ENCODE measurements at regions of chr2 and their contacts with region 1.

Region 1: GRCh38 chr2:71510196-71510807 is 56.9 kb downstream of the DYSF start:
- DNase-seq: peak; percentile 64 to 91
- ATAC-seq: peak; percentile 73 to 91; a peak in 5 of 6 replicates
- H3K4me3 ChIP-seq: no peak overlapping the region
- H3K27ac ChIP-seq: no peak overlapping the region
- H3K4me1 ChIP-seq: no peaks in the 10 kb centered on the region
- CTCF ChIP-seq: peak; percentile 98
- EP300 ChIP-seq: no peak
- POLR2A ChIP-seq: no peak
- RAD21 ChIP-seq: peak; percentile 94 to 95

Region 2: DNA sequence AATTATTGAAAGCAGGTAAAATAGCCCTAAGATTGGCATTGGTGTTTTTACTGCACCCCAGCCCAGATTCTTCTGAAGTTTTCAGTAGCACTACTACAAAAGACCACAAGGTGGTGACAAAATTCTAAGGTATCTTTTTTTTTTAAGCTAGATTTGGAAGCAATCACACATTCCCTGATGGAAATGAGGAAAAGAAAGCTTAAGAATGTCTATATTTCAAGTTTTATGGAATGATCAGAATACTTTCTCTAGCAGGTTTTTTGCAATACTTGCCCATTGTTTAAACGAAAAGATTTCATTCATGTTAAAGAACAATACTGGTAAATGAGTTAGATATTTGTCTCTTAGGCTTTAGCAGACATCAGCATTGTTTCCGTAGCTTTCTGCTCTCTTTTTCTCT is 210.8 kb before region 1 on chr2:
- CTCF ChIA-PET with region 1: interaction called, 234 read pairs
- POLR2A ChIA-PET with region 1: interaction called, 7 read pairs
- DNase-seq: peak; percentile 39 to 41
- ATAC-seq: peak; percentile 71 to 74; a peak in 5 of 6 replicates
- H3K4me3 ChIP-seq: no peak overlapping the region
- H3K27ac ChIP-seq: no peak overlapping the region
- H3K4me1 ChIP-seq: no peaks in the 10 kb centered on the region
- CTCF ChIP-seq: peak; percentile 90
- EP300 ChIP-seq: no peak
- POLR2A ChIP-seq: no peak
- RAD21 ChIP-seq: peak; percentile 80 to 83

Region 3: DNA sequence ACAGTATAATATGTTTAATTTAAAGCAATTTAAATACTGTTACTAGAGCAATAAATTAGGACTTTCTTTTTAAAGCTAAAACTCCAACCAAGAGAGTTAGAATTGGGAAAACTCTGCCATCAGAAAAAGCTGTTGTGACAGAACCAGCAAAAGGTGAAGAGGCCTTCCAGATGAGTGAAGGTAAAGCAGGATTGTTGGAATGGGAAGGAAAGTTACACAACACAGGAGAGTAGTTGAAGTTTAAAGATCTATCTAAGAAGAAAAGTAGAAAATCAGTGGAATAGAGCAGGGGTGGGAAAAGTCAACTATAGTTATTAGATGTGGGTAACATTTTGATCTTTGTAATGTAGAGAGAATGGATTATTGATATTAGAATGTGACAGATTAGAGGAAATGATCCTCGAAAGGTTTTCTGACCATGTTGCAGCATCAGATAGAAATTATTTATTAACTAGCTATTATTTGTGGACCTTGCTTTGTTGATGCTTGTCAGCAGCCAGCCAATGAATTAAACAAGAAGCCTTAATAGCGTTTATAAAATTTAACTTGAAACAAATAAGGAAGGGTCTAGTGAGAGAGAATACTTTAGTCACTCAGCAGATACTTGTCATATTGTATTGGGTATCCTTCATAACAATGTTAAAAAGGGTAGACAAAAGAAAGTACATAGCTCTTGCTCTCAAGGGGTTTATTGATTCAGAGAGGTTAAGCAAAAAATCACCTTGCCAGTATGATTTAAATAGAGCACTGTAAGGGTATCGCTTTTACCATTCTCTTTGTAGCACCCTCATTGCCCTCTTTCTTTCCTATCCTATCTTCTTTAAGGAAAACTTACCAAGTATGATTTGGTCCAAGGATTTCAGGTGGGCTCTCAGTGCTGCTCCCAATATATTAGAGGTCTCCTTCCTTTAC is 81.6 kb before region 1 on chr2:
- CTCF ChIA-PET with region 1: interaction called, 10 read pairs
- POLR2A ChIA-PET with region 1: no interaction called
- DNase-seq: no peak
- ATAC-seq: no peak
- H3K4me3 ChIP-seq: no peak overlapping the region
- H3K27ac ChIP-seq: no peak overlapping the region
- H3K4me1 ChIP-seq: no peaks in the 10 kb centered on the region; the same call in 2 of the 3 replicates
- CTCF ChIP-seq: no peak
- EP300 ChIP-seq: no peak
- POLR2A ChIP-seq: no peak
- RAD21 ChIP-seq: no peak

Region 4: GRCh38 chr2:71466303-71467173 is 43.8 kb before region 1 on chr2:
- CTCF ChIA-PET with region 1: interaction called, 311 read pairs
- POLR2A ChIA-PET with region 1: no interaction called
- DNase-seq: peak; percentile 41 to 46
- ATAC-seq: peak; percentile 55 to 78
- H3K4me3 ChIP-seq: peak overlapping the region; percentile 57
- H3K27ac ChIP-seq: peak overlapping the region; percentile 30 to 79; a peak in 5 of 6 replicates
- H3K4me1 ChIP-seq: no peaks in the 10 kb centered on the region
- CTCF ChIP-seq: no peak
- EP300 ChIP-seq: no peak
- POLR2A ChIP-seq: no peak
- RAD21 ChIP-seq: no peak

Region 5: DNA sequence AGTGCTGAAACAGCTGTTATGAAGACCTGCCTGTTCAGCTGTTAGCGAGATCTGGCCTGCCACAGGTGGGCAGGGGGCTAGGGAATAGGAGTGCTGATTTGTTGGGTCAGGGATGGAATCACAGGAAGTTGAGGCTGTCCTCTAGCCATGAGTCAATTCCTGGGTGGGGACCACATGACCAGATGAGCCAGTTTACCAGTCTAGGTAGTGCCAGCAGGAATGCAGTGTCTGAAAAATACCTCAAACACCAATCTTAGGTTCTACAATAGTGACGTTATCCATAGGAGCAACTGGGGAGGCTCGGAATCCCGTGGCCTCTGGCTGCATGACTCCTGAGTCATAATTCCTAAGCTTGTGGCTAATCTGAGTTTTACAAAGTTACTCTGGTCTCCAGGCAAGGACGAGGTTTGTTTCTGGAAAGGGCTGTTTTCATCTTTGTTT is 12.0 kb before region 1 on chr2:
- CTCF ChIA-PET with region 1: interaction called, 47 read pairs
- POLR2A ChIA-PET with region 1: no interaction called
- DNase-seq: peak; percentile 25 to 75
- ATAC-seq: peak; percentile 83 to 84
- H3K4me3 ChIP-seq: no peak overlapping the region
- H3K27ac ChIP-seq: peak overlapping the region; percentile 14 to 55; a peak in 3 of 6 replicates
- H3K4me1 ChIP-seq: 0 out of 3 replicates have a peak, but pooled peaks cover 13% of the 10 kb centered on the region
- CTCF ChIP-seq: no peak
- EP300 ChIP-seq: no peak
- POLR2A ChIP-seq: no peak
- RAD21 ChIP-seq: no peak

Region 6: DNA sequence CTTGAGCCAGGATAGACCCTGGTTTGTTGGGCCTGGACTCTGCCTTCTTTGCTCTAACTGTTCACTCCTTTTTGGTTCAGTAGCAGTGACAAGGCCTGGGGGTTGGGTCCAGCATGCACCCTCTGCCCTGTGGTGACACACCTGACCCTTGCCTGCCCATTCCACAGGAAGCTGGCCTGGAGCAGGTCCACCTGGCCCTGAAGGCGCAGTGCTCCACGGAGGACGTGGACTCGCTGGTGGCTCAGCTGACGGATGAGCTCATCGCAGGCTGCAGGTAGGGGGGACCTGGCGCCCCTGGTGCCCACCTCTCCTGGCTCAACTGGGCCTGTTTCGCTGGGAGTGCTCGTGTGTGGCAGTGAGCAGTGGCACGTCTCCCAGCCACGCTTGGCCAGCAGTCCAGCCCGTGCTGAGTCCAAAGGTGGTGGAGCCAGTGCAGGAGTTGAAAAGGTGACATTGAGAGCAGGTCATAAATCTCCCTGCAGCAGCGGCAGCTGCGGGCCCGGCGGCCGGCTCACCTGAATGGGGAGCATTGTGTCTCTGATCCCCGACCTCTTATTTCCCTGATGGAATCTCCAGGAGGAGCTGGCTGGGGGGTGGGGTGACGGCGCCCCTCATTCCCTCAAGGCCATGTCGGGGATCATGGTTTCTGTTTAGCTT is 45.6 kb after region 1 on chr2:
- CTCF ChIA-PET with region 1: no interaction called
- POLR2A ChIA-PET with region 1: no interaction called
- DNase-seq: no peak
- ATAC-seq: no peak
- H3K4me3 ChIP-seq: no peak overlapping the region
- H3K27ac ChIP-seq: no peak overlapping the region
- H3K4me1 ChIP-seq: peaks cover 18% of the 10 kb centered on the region
- CTCF ChIP-seq: no peak
- EP300 ChIP-seq: no peak
- POLR2A ChIP-seq: no peak
- RAD21 ChIP-seq: no peak

Region 7: GRCh38 chr2:71576541-71576940 is 66.2 kb after region 1 on chr2:
- CTCF ChIA-PET with region 1: no interaction called
- POLR2A ChIA-PET with region 1: no interaction called
- DNase-seq: no peak
- ATAC-seq: no peak
- H3K4me3 ChIP-seq: no peak overlapping the region
- H3K27ac ChIP-seq: no peak overlapping the region
- H3K4me1 ChIP-seq: no peaks in the 10 kb centered on the region
- CTCF ChIP-seq: no peak
- EP300 ChIP-seq: no peak
- POLR2A ChIP-seq: no peak
- RAD21 ChIP-seq: no peak